Calu3 (cell line): ENCODE measurements at regions of chr7 and their contacts with region 1.

Region 1: DNA sequence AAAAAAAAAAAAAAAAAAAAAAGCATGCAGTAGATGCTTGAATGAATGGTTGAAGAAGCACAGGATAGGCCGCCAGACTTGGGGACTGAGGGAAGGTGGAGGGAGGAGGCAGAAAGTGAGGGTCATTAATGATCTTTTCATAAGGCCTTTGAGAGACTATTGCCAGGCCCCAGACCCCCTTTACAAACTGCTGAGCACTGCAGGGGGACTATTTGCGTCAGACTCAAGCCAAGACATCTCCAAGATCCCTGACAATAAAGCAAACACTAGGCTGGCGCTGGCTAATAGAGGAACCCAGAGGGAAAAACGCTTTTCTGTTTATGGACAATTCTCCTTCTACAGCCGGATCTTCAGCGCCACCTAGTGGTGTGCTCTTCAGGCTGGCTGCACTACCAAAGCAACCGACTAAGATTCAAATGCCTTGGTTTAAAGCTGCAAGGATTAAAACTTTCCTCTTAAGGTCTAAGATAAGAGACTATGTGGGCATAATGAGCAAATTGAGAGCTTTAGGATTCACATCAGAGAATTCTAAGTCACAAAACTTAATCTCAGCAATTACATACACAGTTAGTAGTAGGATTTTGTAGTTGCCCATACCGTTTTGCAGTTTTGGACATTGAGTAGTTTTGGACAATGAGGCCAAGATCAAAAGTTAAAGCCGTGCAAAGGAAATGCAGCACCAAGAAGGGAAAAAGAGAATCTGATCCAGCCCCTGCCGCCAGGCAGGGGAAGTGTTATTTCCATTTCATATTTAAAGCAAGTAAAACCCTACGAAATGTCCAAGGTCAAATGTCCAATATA is 17.9 kb upstream of the AGK start:
- DNase-seq: peak; percentile 62
- H3K4me3 Mint-ChIP-seq: no peak overlapping the region
- H3K27ac Mint-ChIP-seq: no peak overlapping the region
- H3K4me1 Mint-ChIP-seq: no peaks in the 10 kb centered on the region
- H3K27me3 Mint-ChIP-seq: peaks cover 25% of the 10 kb centered on the region
- CTCF ChIP-seq: peak; percentile 85

Region 2: DNA sequence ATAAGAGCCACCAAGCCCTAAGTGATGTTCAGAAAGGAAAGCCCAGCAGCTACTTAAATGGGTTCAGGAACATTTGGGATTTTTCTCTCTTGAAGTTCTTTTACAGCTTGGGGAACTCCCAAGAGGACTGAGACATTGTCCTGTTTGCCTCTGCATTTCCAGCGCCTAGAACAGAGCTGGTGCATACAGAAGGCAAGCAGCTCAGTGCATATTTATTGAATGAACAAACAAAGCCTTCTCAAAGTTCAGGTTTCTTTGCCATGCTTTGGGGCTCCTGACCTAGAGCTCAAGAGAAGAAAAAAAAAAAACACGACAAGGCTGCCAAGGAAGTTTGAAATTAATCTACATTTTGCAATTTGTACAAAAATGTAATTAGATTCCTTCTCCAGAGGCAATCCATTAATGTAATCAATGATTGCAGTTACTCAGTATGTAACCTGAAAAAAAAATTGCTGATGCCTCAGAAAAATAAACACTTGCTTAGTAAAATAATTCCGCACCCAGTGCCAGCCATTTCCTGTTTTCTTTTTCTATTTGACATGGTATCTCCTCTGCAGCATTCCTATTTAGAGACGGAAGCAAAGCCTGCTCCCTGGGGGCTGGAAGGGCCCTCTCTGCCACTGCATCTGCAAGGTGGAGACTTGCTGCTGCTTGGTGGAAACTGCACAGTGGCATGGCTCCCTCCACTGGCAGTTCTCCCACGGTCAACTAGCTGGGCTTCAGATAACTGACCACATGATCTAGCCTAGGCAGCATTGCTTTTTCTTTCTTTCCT is 302.1 kb before region 1 on chr7:
- CTCF ChIA-PET with region 1: no interaction called
- intact Hi-C with region 1: loop called (anchors 10 kb)
- DNase-seq: peak; percentile 49
- H3K4me3 Mint-ChIP-seq: no peak overlapping the region
- H3K27ac Mint-ChIP-seq: no peak overlapping the region
- H3K4me1 Mint-ChIP-seq: no peaks in the 10 kb centered on the region
- H3K27me3 Mint-ChIP-seq: peaks cover 14% of the 10 kb centered on the region
- CTCF ChIP-seq: no peak

Region 3: GRCh38 chr7:141511676-141512396 is 21.5 kb before region 1 on chr7:
- CTCF ChIA-PET with region 1: no interaction called
- intact Hi-C with region 1: no loop called
- DNase-seq: peak; percentile 27
- H3K4me3 Mint-ChIP-seq: peak overlapping the region; percentile 71
- H3K27ac Mint-ChIP-seq: no peak overlapping the region
- H3K4me1 Mint-ChIP-seq: peaks cover 12% of the 10 kb centered on the region
- H3K27me3 Mint-ChIP-seq: peaks cover 67% of the 10 kb centered on the region
- CTCF ChIP-seq: no peak